ENCODE measurements at regions of chr11 and their contacts with region 1.

Region 1: GRCh38 chr11:62542750-62543567 is 3.6 kb downstream of the AHNAK start:
- DNase-seq: peak; percentile 94
- H3K4me3 Mint-ChIP-seq: peak overlapping the region; percentile 99
- H3K27ac Mint-ChIP-seq: peak overlapping the region; percentile 95
- H3K4me1 Mint-ChIP-seq: peaks cover 68% of the 10 kb centered on the region
- H3K27me3 Mint-ChIP-seq: peaks cover 5% of the 10 kb centered on the region

Region 2: DNA sequence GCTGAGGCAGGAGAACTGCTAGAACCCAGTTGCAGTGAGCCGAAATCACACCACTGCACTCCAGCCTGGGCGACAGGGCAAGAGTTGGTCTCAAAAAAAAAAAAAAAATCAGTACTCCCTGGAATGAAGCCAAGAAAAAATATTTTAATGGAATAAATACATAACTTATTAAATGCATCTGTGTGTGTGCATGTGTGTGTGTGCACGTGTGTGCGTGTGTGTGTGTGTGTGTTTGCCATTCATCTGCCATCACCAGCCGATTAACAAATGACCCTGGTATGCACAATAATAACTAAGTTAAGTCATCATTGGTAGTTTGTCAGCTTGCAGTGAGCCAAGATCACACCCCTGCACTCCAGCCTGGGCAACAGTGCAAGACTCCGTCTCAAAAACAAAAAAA is 159.1 kb before region 1 on chr11:
- intact Hi-C with region 1: loop called (anchors 5 kb)
- DNase-seq: no peak
- H3K4me3 Mint-ChIP-seq: no peak overlapping the region
- H3K27ac Mint-ChIP-seq: no peak overlapping the region
- H3K4me1 Mint-ChIP-seq: peaks cover 19% of the 10 kb centered on the region
- H3K27me3 Mint-ChIP-seq: peaks cover 14% of the 10 kb centered on the region

Region 3: GRCh38 chr11:62427630-62428233 is 115.2 kb before region 1 on chr11:
- intact Hi-C with region 1: loop called (anchors 1 kb)
- DNase-seq: peak; percentile 74
- H3K4me3 Mint-ChIP-seq: peak overlapping the region; percentile 56
- H3K27ac Mint-ChIP-seq: peak overlapping the region; percentile 95
- H3K4me1 Mint-ChIP-seq: peaks cover 48% of the 10 kb centered on the region
- H3K27me3 Mint-ChIP-seq: peaks cover 5% of the 10 kb centered on the region

Region 4: DNA sequence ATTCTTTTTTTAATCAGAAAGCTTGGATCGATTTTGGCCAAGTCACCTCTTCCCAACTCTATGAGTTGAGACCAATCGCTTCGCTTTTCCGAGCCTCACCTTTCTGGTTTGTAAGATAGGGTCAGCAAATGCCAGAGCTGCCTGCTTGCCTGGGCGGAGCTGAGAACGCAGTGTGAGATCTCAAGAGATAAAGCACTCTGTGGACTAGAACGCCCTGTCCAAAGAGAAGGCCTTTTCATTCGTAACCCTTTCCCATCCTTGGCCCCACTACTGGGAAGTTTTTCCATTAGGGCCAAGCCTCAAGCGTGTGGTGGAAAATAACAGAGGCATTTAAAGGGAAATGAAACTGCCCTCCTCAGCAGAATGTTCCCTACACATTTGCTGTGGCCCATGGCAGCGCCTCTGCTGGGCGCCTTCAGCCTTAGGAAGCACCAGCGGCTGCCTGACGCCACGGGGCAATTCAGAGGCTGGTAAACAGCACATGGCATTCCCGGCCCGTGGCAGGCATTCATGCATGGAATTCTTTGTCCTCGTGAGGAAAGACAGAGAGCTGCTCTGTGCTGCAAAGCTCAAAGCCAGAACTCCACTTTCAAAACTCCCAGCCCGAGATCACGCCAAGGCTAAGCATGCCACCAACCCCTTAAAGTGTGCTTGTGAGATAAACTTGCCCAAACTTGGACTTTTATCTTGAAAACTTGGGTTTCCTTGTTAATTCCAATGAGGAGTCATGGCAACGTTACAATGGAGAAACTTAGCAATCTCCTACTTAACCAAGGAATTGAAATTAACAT is 34.5 kb before region 1 on chr11:
- intact Hi-C with region 1: loop called (anchors 5 kb)
- DNase-seq: no peak
- H3K4me3 Mint-ChIP-seq: no peak overlapping the region
- H3K27ac Mint-ChIP-seq: no peak overlapping the region
- H3K4me1 Mint-ChIP-seq: peaks cover 2% of the 10 kb centered on the region
- H3K27me3 Mint-ChIP-seq: peaks cover 12% of the 10 kb centered on the region